ENCODE measurements at regions of chr7 and their contacts with region 1.

Region 1: GRCh38 chr7:50317221-50317678 is 12.7 kb downstream of the IKZF1 start:
- DNase-seq: peak; percentile 73
- ATAC-seq: peak; percentile 82
- H3K4me3 Mint-ChIP-seq: peak overlapping the region; percentile 95
- H3K27ac Mint-ChIP-seq: peak overlapping the region; percentile 100
- H3K4me1 Mint-ChIP-seq: peaks cover 93% of the 10 kb centered on the region
- H3K27me3 Mint-ChIP-seq: no peaks in the 10 kb centered on the region

Region 2: DNA sequence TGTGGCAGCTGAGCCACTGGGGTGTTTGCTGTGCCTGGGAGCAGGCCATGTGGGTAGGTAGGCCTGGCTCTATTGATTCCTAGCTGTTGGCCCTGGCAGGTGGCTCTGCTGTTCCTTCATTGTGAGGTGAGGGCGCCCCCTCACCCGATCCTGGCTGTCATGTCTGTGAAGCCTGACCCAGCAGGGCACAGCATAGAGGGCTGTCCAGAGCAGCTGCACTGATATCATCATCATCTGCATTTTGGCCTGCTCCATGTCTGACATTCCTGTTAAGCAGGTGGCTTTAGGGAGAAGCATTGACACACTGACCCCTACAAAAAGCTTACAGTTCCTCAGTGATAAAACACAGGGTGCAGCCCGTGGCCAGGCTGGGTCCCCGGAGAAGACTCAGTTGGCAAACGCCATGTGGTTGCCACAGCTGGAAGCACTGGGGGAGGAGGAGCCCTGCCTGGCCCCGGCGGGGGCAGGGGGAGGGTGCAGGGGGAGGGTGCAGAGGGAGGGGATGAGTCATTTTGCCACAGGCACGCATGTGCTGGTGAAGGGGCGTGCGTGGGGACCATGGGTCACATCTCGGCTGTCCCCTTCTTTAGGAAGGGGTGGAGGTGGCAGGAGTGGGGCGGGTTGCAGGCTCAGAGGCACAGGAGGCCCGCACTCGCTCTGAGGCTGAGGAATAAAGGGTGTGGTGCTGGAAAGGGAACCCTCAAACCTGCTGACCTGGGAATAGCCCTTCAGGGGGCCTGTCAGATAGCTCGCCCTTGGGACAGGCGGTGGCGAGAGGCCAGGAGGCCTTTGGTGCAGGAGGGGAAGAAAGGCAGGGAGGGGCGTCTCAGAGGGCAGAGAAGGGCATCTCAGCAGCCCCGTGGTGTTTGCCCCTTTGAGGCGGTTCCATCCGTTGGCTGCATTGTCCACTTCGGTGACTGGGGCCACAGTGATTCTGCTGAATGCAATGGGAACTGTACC is 18.8 kb after region 1 on chr7:
- CTCF ChIA-PET with region 1: interaction called, 52 read pairs
- POLR2A ChIA-PET with region 1: interaction called, 15 read pairs
- intact Hi-C with region 1: loop called (anchors 1 kb)
- DNase-seq: peak; percentile 93
- ATAC-seq: peak; percentile 34
- H3K4me3 Mint-ChIP-seq: no peak overlapping the region
- H3K27ac Mint-ChIP-seq: no peak overlapping the region
- H3K4me1 Mint-ChIP-seq: peaks cover 2% of the 10 kb centered on the region
- H3K27me3 Mint-ChIP-seq: no peaks in the 10 kb centered on the region

Region 3: GRCh38 chr7:50342616-50343114 is 25.4 kb after region 1 on chr7:
- CTCF ChIA-PET with region 1: interaction called, 52 read pairs
- POLR2A ChIA-PET with region 1: interaction called, 16 read pairs
- intact Hi-C with region 1: no loop called
- DNase-seq: peak; percentile 67
- ATAC-seq: peak; percentile 20
- H3K4me3 Mint-ChIP-seq: peak overlapping the region; percentile 61
- H3K27ac Mint-ChIP-seq: no peak overlapping the region
- H3K4me1 Mint-ChIP-seq: peaks cover 64% of the 10 kb centered on the region
- H3K27me3 Mint-ChIP-seq: no peaks in the 10 kb centered on the region

Region 4: GRCh38 chr7:50404392-50404791 is 87.1 kb after region 1 on chr7:
- CTCF ChIA-PET with region 1: no interaction called
- POLR2A ChIA-PET with region 1: no interaction called
- intact Hi-C with region 1: no loop called
- DNase-seq: no peak
- ATAC-seq: peak; percentile 17
- H3K4me3 Mint-ChIP-seq: no peak overlapping the region
- H3K27ac Mint-ChIP-seq: peak overlapping the region; percentile 32
- H3K4me1 Mint-ChIP-seq: peaks cover 80% of the 10 kb centered on the region
- H3K27me3 Mint-ChIP-seq: no peaks in the 10 kb centered on the region

Measured in activated CD4-positive, alpha-beta T cell treated with anti-CD3 and anti-CD28 coated beads for 36 hours (primary cell).